MCF 10A (cell line): ENCODE measurements at regions of chr3 and their contacts with region 1.

Region 1: GRCh38 chr3:71725279-71725991 is at the start of gene EIF4E3:
- DNase-seq: peak; percentile 17
- H3K4me3 Mint-ChIP-seq: peak within 1 kb of the TSS; percentile 77
- H3K27ac Mint-ChIP-seq: peak within 1 kb of the TSS; percentile 5
- H3K4me1 Mint-ChIP-seq: no peaks in the 10 kb centered on the region
- H3K27me3 Mint-ChIP-seq: no peaks in the 10 kb centered on the region
- CTCF ChIP-seq: no peak
- total RNA-seq, gene EIF4E3: 4.3 and 7.6 TPM in 2 replicates

Region 2: DNA sequence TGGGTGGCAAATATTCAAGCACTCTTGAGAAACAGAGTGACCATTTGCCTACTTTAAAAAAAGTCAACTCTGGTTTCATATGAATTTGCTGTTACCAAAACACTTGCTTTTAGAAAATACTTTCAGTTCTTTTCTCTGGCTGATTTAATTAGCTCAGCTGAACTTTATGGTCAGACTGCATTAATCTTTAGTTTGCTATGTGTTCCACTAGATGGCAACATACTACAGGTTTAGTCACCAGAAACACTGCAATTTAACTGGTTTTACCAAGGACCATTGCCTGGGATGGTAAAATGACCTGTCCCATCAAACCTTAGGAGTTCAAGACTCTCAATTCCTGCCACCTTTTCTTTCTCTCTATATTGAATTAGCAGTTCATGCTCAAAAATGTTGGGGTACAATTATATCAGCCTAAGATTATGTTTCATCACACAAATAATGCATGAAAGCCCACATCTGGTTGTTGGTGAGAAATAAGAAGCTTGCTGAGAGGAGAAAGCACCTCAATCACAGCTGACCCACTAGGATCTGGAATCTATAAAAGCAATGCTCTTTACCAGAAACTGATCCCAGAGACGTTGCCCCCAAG is 14.4 kb before region 1 on chr3:
- CTCF ChIA-PET with region 1: interaction called, 28 read pairs
- POLR2A ChIA-PET with region 1: interaction called, 5 read pairs
- intact Hi-C with region 1: no loop called
- DNase-seq: peak; percentile 56
- H3K4me3 Mint-ChIP-seq: no peak overlapping the region
- H3K27ac Mint-ChIP-seq: no peak overlapping the region
- H3K4me1 Mint-ChIP-seq: no peaks in the 10 kb centered on the region
- H3K27me3 Mint-ChIP-seq: no peaks in the 10 kb centered on the region
- CTCF ChIP-seq: peak; percentile 48

Region 3: GRCh38 chr3:71744738-71745137 is 19.3 kb after region 1 on chr3:
- CTCF ChIA-PET with region 1: interaction called, 15 read pairs
- POLR2A ChIA-PET with region 1: interaction called, 3 read pairs
- intact Hi-C with region 1: no loop called
- DNase-seq: no peak
- H3K4me3 Mint-ChIP-seq: no peak overlapping the region
- H3K27ac Mint-ChIP-seq: no peak overlapping the region
- H3K4me1 Mint-ChIP-seq: no peaks in the 10 kb centered on the region
- H3K27me3 Mint-ChIP-seq: no peaks in the 10 kb centered on the region
- CTCF ChIP-seq: no peak

Region 4: GRCh38 chr3:71771126-71771525 is 45.7 kb after region 1 on chr3:
- CTCF ChIA-PET with region 1: no interaction called
- POLR2A ChIA-PET with region 1: no interaction called
- intact Hi-C with region 1: no loop called
- DNase-seq: no peak
- H3K4me3 Mint-ChIP-seq: no peak overlapping the region
- H3K27ac Mint-ChIP-seq: no peak overlapping the region
- H3K4me1 Mint-ChIP-seq: no peaks in the 10 kb centered on the region
- H3K27me3 Mint-ChIP-seq: peaks cover 32% of the 10 kb centered on the region
- CTCF ChIP-seq: no peak

Region 5: DNA sequence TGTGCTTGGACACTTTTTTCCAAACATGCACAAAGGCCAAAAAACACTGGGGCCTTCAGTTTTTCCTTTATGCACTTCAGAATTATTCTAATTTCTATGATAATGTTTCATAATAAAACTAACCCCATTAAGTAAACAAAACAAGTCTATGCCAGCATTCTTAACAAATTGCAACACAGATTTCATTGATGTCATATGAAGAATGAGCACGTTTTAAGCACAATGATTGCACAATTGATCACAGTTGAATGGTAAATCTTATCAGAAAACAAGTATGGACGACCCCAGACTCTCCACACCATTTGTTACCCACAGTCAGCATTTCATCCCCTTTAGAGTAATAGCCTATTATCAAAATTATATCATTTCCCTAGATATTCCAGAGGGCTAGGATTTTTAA is 106.2 kb after region 1 on chr3:
- CTCF ChIA-PET with region 1: interaction called, 10 read pairs
- POLR2A ChIA-PET with region 1: no interaction called
- intact Hi-C with region 1: no loop called
- DNase-seq: peak; percentile 62
- H3K4me3 Mint-ChIP-seq: no peak overlapping the region
- H3K27ac Mint-ChIP-seq: no peak overlapping the region
- H3K4me1 Mint-ChIP-seq: peaks cover 7% of the 10 kb centered on the region
- H3K27me3 Mint-ChIP-seq: no peaks in the 10 kb centered on the region
- CTCF ChIP-seq: no peak

Region 6: DNA sequence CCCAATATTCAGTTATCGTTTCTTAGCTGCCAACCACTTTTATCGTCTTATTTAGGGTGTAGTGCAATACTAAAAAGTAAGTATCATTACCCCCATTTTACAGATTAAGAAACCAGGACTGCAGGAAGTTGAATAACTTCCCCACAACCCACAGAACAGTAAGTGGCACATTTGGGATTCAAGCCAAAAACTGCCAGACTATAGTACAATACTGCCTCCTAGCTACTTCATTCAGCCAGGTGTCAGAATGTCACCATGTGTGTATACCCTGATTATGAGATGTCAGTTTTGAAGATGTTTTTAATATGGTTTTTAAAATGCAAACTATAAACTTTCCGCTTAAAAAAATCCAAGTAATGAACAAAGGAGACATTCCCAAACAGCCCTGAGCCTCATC is 133.7 kb after region 1 on chr3:
- CTCF ChIA-PET with region 1: interaction called, 71 read pairs
- POLR2A ChIA-PET with region 1: interaction called, 4 read pairs
- intact Hi-C with region 1: loop called (anchors 1 kb)
- DNase-seq: peak; percentile 80
- H3K4me3 Mint-ChIP-seq: no peak overlapping the region
- H3K27ac Mint-ChIP-seq: no peak overlapping the region
- H3K4me1 Mint-ChIP-seq: no peaks in the 10 kb centered on the region
- H3K27me3 Mint-ChIP-seq: peaks cover 44% of the 10 kb centered on the region
- CTCF ChIP-seq: peak; percentile 35

Region 7: GRCh38 chr3:73086071-73086494 is 1360.6 kb after region 1 on chr3:
- CTCF ChIA-PET with region 1: no interaction called
- POLR2A ChIA-PET with region 1: no interaction called
- intact Hi-C with region 1: loop called (anchors 5 kb)
- DNase-seq: peak; percentile 54
- H3K4me3 Mint-ChIP-seq: no peak overlapping the region
- H3K27ac Mint-ChIP-seq: no peak overlapping the region
- H3K4me1 Mint-ChIP-seq: no peaks in the 10 kb centered on the region
- H3K27me3 Mint-ChIP-seq: no peaks in the 10 kb centered on the region
- CTCF ChIP-seq: peak; percentile 78